ENCODE measurements at regions of chr7 and their contacts with region 1.

Region 1: DNA sequence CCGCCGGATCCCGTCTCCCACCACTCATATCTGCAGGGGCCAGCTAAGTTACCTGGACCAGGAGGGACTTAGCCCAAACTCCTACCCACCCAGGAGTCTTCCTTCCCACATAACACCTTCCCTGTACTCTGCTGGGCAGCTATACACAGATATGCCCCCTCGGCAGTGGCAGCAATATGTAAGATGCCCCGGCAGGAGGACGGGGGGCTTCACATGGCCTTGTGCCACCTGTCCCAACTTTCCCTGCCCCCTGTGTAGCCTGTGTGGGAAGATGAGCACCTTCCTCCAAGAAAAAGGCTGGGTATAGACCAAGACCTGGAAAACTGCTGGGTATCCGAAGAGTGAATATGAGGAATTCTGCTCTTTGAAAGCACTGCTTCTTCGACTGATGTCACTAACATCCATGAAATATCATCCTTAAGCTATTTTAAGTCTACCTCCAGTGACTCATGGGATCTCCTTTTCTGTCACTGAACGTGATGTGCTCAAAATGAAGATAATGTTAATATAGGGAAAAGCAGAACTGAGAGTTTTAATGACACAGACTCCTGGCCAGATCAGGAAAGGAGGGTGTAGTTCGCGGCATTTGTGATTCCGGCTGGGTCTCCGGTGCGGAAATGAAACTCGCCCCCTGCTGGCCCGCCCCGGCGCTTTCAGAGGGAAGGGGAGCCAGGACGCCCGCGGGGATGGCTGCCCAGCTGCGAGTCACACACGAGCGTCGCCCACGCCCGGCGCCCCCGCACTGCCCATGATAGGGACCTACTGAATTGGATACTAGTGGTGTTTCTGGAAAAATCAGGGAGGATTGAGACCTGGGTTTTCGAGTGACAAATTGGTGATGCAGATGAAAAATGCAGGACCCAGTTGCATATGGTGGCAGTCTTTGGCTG is 256.9 kb upstream of the NFE2L3 start:
- DNase-seq: peak; percentile 91
- H3K4me3 Mint-ChIP-seq: peak overlapping the region; percentile 62
- H3K27ac Mint-ChIP-seq: no peak overlapping the region
- H3K4me1 Mint-ChIP-seq: peaks cover 30% of the 10 kb centered on the region
- H3K27me3 Mint-ChIP-seq: peaks cover 21% of the 10 kb centered on the region
- CTCF ChIP-seq: peak; percentile 93

Region 2: GRCh38 chr7:26061688-26062150 is 166.6 kb after region 1 on chr7:
- CTCF ChIA-PET with region 1: interaction called, 5 read pairs
- intact Hi-C with region 1: loop called (anchors 1 kb)
- DNase-seq: peak; percentile 91
- H3K4me3 Mint-ChIP-seq: no peak overlapping the region
- H3K27ac Mint-ChIP-seq: no peak overlapping the region
- H3K4me1 Mint-ChIP-seq: peaks cover 12% of the 10 kb centered on the region
- H3K27me3 Mint-ChIP-seq: peaks cover 43% of the 10 kb centered on the region
- CTCF ChIP-seq: peak; percentile 96

Region 3: DNA sequence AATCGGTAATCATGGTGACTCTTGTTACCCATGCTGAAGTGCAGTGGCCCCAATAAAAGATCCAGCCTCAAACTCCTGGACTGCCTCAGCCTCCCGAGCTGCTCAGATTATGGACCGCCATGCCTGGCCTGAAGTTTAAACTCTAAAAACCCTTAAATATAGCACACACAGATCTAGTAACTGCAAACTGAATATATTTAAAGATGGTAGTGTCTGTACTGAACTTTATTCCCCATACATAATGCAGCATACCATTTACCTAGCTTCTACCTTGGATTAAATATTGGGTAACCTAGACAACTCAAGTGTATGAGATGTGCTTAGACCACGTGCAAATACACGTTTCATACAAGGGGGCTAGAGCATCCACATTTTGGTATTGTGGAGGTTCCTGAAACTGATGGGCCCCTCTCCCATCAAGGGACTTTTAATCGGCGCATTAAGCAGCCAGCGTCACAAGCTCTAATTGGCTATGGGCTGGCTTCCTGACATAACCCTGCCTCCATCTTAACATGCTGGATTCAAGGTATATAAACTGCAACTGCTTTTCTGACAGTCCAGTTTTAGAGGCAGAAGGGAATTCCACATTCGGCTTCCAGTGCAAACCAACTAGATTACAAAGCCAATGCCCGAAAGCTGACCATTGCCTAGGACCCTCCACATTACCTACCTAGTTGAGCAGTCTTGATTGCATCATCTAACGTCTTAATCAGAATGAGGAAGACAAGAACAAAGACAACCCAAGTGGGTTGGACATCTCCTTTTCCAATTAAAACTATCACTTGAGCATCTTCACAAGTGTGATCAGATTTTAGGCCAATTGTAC is 292.4 kb after region 1 on chr7:
- CTCF ChIA-PET with region 1: interaction called, 3 read pairs
- intact Hi-C with region 1: loop called (anchors 5 kb)
- DNase-seq: no peak
- H3K4me3 Mint-ChIP-seq: no peak overlapping the region
- H3K27ac Mint-ChIP-seq: peak overlapping the region; percentile 41
- H3K4me1 Mint-ChIP-seq: peaks cover 76% of the 10 kb centered on the region
- H3K27me3 Mint-ChIP-seq: no peaks in the 10 kb centered on the region
- CTCF ChIP-seq: no peak

Region 4: DNA sequence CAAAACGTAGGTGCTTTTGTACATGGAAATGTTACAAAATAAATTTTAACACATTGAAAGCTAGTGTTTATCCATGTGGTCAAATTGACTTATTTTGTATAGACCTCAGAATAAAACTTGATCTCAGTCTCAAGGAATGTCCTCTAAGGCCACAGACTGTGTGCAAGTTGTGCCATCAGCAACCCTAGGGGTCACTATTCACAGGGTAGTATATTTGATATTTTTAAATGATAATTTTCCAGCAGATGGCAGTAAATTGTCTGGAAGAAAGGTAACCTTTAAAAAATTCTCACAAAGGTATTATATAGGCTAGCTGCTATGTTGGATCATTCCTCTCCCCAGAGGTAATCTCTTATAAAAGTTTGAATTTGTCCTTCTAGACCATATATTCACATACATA is 383.6 kb after region 1 on chr7:
- CTCF ChIA-PET with region 1: interaction called, 3 read pairs
- intact Hi-C with region 1: loop called (anchors 5 kb)
- DNase-seq: peak; percentile 13
- H3K4me3 Mint-ChIP-seq: no peak overlapping the region
- H3K27ac Mint-ChIP-seq: no peak overlapping the region
- H3K4me1 Mint-ChIP-seq: no peaks in the 10 kb centered on the region
- H3K27me3 Mint-ChIP-seq: no peaks in the 10 kb centered on the region
- CTCF ChIP-seq: peak; percentile 57

Region 5: GRCh38 chr7:27150568-27151340 is 1255.6 kb after region 1 on chr7:
- CTCF ChIA-PET with region 1: no interaction called
- intact Hi-C with region 1: loop called (anchors 5 kb)
- DNase-seq: peak; percentile 91
- H3K4me3 Mint-ChIP-seq: peak overlapping the region; percentile 76
- H3K27ac Mint-ChIP-seq: peak overlapping the region; percentile 73
- H3K4me1 Mint-ChIP-seq: peaks cover 11% of the 10 kb centered on the region
- H3K27me3 Mint-ChIP-seq: peaks cover 36% of the 10 kb centered on the region
- CTCF ChIP-seq: peak; percentile 96

Measured in Calu3 (cell line).